ENCODE measurements at regions of chr16 and their contacts with region 1.

Region 1: DNA sequence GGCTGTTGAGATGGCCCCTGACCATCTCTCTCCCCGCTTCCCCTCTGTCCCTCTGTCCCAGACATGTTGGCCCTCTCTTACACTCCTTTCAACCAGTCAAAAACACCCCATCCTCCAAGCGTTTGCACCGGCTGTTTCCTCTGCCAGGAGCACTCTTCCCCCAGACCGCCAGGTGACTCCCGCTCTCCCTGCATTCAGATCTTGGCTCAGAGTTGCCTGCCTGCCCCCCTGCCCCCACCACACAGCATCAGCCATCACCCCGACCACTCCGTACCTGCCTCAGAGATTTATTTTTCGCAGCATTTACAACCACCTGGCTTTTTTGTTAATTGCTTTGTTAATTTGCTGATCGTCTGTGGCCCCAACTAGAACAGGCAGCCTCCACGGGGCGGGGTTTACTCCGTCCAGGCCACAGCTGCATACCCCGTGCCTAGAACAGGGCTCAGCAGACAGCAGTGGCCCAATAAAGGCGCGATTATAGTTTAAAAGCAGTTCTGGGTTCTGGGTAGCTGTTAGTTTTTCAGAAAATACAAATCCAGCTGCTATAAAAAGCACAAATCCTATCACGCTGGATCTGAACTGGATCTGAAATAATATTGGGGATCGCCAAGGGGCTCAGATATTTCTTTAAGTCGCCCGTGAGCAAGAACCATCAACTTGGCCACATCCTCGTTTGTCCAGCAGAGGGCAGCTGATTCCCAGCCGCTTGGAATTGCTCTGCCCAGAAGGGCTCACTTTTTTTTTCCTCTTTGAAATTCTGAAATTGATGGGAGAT is 173.6 kb downstream of the IRF8 start:
- DNase-seq: peak; percentile 75
- H3K4me3 ChIP-seq: no peak overlapping the region
- H3K27ac ChIP-seq: no peak overlapping the region
- H3K4me1 ChIP-seq: peaks cover 9% of the 10 kb centered on the region
- H3K27me3 ChIP-seq: peaks cover 0 to 2% of the 10 kb centered on the region in 2 experiments
- CTCF ChIP-seq: peak; percentile 75 to 85
- POLR2A ChIP-seq: no peak

Region 2: GRCh38 chr16:86022381-86022960 is 50.0 kb before region 1 on chr16:
- CTCF ChIA-PET with region 1: no interaction called
- POLR2A ChIA-PET with region 1: interaction called, 11 read pairs
- dilution Hi-C with region 1: no loop called
- intact Hi-C with region 1: no loop called
- DNase-seq: no peak
- H3K4me3 ChIP-seq: no peak overlapping the region
- H3K27ac ChIP-seq: no peak overlapping the region
- H3K4me1 ChIP-seq: no peaks in the 10 kb centered on the region
- H3K27me3 ChIP-seq: no peaks in the 10 kb centered on the region
- CTCF ChIP-seq: no peak
- POLR2A ChIP-seq: no peak

Region 3: DNA sequence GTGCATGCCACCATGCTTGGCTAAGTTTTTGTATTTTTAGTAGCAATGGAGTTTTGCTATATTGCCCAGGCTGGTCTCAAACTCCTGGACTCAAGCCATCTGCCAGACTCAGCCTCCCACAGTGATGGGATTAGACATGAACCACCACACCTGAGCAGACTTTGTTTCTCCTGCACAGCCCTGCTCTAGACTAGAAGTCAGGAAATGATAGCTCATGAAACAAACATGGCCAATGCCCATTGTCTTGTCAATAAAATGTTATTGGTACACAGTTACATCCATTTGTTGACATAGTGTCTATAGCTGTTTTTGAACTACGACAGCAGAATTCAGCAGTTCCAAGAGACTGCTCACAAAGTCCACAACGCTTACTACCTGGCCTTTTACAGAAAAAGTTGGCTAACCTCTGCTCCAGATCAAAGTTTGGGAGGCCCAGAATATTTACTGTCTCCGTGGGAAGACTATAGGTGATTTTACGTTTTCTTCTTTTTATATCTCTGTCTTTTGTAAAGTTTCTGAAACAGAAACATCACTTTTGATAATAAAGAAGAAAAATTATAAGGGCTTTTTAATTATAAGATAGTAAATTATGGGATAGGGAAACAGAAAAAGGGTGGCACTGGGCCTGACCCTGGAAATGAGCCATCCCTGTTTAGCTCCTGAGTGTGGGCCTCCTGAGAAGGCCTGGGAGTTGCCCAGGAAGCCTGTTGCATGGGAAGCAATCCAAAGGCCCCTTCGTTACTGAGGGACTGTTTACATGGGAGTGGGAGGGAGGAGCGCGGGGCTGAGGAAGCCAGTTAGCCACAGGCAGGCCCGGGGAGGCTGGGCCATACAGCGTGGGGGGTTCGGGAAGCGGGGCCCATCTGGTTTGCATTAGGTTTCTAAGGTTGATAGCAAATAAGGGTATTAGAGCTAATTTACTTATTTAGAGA is 28.0 kb after region 1 on chr16:
- CTCF ChIA-PET with region 1: interaction called, 11 read pairs
- POLR2A ChIA-PET with region 1: no interaction called
- dilution Hi-C with region 1: no loop called
- intact Hi-C with region 1: no loop called
- DNase-seq: no peak
- H3K4me3 ChIP-seq: no peak overlapping the region
- H3K27ac ChIP-seq: no peak overlapping the region
- H3K4me1 ChIP-seq: no peaks in the 10 kb centered on the region
- H3K27me3 ChIP-seq: no peaks in the 10 kb centered on the region
- CTCF ChIP-seq: no peak
- POLR2A ChIP-seq: no peak